ENCODE measurements at regions of chr2 and their contacts with region 1.

Region 1: GRCh38 chr2:112121682-112122254 is 16.4 kb upstream of the FBLN7 start:
- DNase-seq: no peak
- ATAC-seq: no peak
- H3K4me3 ChIP-seq: no peak overlapping the region
- H3K27ac ChIP-seq: no peak overlapping the region
- H3K4me1 ChIP-seq: no peaks in the 10 kb centered on the region
- H3K27me3 ChIP-seq: no peaks in the 10 kb centered on the region

Region 2: DNA sequence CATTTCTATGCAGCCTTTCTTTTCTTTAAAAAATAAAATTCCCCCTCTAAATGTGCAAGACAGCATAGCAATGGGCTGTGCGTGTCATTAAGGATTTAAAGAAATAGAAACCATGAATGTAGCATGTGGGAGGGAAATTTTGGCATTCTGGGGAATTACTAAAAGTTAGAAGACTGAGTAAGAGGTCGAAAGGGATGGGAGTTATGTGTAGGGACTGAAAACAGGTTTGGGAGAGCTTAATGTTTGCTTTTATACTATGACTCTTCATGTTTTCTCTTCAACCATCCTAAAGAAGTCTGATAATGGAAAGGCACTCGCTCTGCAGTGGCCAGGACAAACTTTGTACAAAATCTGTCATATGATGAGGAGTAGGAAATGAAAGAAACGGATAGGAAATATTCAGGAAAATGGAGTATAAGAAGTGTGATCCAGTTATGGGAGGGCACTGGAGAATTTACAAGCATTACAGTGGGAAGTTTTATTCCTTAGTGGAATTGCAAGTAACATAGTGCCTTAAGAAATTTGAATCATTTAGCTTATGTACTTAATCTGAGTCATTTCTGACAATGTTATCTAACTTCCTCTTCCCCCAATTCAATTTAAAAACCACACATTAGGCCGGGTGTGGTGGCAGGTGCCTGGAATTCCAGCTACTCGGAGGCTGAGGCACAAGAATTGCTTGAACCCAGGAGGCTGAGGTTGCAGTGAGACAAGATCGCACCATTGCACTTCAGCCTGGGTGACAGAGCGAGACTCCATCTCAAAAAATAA is 46.1 kb before region 1 on chr2:
- intact Hi-C with region 1: no loop called
- DNase-seq: no peak
- ATAC-seq: no peak
- H3K4me3 ChIP-seq: no peak overlapping the region
- H3K27ac ChIP-seq: no peak overlapping the region
- H3K4me1 ChIP-seq: no peaks in the 10 kb centered on the region
- H3K27me3 ChIP-seq: peaks cover 0 to 2% of the 10 kb centered on the region in 2 donors

Region 3: GRCh38 chr2:112242384-112242783 is 120.6 kb after region 1 on chr2:
- intact Hi-C with region 1: loop called in 1 of 2 experiments (anchors 10 kb)
- DNase-seq: no peak
- ATAC-seq: no peak
- H3K4me3 ChIP-seq: no peak overlapping the region
- H3K27ac ChIP-seq: no peak overlapping the region
- H3K4me1 ChIP-seq: no peaks in the 10 kb centered on the region
- H3K27me3 ChIP-seq: no peaks in the 10 kb centered on the region

Region 4: GRCh38 chr2:112433932-112434730 is 312.4 kb after region 1 on chr2:
- intact Hi-C with region 1: loop called in 1 of 2 experiments (anchors 5 kb)
- DNase-seq: peak in 1 of 2 donors; percentile 65
- ATAC-seq: no peak
- H3K4me3 ChIP-seq: no peak overlapping the region
- H3K27ac ChIP-seq: no peak overlapping the region
- H3K4me1 ChIP-seq: no peaks in the 10 kb centered on the region
- H3K27me3 ChIP-seq: no peaks in the 10 kb centered on the region